ENCODE measurements at regions of chr3 and their contacts with region 1.

Region 1: GRCh38 chr3:115692887-115693524 is 69.7 kb downstream of the GAP43 start:
- DNase-seq: peak; percentile 86
- H3K4me3 Mint-ChIP-seq: no peak overlapping the region
- H3K27ac Mint-ChIP-seq: no peak overlapping the region
- H3K4me1 Mint-ChIP-seq: peaks cover 2% of the 10 kb centered on the region
- H3K27me3 Mint-ChIP-seq: no peaks in the 10 kb centered on the region

Region 2: DNA sequence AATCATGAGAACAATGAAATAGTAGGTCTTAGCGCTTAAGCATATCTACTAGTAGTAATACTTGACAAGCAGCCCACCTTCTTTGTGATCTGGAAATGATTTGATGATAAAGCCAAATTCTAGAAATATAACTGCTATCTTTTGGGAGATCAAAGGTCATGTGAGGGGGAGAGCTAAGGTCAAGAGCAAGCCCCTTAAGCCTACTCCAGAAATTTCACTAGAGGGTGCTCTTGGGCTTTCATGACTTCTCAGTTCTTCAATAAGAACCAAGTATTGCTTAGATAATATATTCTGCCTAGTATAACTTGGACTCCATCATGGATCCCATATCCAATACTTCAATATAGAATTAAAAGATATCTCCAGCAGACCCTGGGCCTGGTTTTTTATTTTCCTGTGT is 865.5 kb before region 1 on chr3:
- CTCF ChIA-PET with region 1: no interaction called
- intact Hi-C with region 1: loop called (anchors 1 kb)
- DNase-seq: peak; percentile 11
- H3K4me3 Mint-ChIP-seq: no peak overlapping the region
- H3K27ac Mint-ChIP-seq: no peak overlapping the region
- H3K4me1 Mint-ChIP-seq: peaks cover 4% of the 10 kb centered on the region
- H3K27me3 Mint-ChIP-seq: no peaks in the 10 kb centered on the region

Region 3: DNA sequence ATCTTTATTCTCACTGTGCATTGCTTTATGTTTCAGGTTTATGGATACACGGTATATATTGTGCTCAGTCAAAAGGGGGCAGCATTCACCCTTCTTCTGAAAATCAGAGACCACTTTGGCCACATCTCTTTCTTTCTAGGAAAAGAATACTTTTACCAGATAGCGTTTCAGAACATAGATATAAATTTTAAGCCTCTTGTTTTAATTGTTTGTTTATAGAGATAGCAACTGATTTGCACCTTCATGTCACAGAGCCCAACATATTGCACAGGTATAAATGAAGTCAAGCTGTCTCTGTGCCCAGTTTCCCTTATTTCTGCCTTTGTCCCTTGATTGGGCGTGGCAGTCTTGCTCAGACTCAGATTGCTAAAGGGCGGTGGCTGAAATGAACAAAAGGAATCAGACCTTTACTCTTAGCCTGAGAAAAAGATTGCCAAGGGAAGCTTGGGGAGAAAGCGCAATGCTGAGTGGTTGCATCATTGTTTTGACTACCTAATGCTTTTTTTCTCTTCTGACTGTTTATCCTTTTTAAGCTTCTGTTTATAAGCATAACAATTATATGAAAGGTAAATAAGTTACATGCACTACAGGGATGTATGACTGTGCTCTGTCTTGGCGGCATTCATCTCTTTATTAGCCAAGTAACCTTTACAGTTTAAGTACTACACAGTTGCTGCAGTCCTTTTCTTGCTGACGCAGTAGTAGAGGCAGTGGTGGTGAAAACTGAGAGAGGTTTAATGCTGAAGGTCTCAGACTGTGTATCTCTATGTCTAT is 475.1 kb before region 1 on chr3:
- CTCF ChIA-PET with region 1: interaction called, 21 read pairs
- intact Hi-C with region 1: loop called (anchors 1 kb)
- DNase-seq: peak; percentile 23
- H3K4me3 Mint-ChIP-seq: no peak overlapping the region
- H3K27ac Mint-ChIP-seq: no peak overlapping the region
- H3K4me1 Mint-ChIP-seq: no peaks in the 10 kb centered on the region
- H3K27me3 Mint-ChIP-seq: no peaks in the 10 kb centered on the region

Region 4: DNA sequence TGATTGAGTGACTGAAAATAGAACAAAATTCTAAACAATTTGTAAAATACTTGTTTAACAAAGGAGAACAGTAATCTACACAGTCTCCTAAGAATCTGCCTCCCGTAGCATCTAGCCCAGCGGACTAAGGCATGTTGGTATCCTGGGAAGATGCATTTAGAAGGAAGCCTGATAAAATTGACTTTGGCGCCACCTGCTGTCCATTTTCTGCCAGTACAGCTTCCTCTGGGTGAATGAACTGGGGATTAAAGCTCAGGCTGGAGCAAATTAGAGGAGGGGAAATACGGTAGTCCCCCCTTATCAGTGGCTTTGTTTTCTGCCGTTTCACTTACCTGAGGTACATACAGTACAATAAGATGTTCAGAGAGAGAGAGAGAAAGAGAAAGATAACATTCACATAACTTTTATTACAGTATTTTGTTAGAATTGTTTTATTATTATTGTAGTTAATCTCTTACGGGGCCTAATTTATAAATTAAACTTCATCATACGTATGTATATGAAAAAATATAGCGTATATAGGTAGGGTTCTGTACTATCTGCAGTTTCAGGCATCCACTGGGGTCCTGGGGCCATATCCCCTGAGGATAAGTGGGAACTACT is 121.9 kb after region 1 on chr3:
- CTCF ChIA-PET with region 1: interaction called, 8 read pairs
- intact Hi-C with region 1: loop called (anchors 1 kb)
- DNase-seq: peak; percentile 82
- H3K4me3 Mint-ChIP-seq: no peak overlapping the region
- H3K27ac Mint-ChIP-seq: no peak overlapping the region
- H3K4me1 Mint-ChIP-seq: no peaks in the 10 kb centered on the region
- H3K27me3 Mint-ChIP-seq: no peaks in the 10 kb centered on the region

Region 5: DNA sequence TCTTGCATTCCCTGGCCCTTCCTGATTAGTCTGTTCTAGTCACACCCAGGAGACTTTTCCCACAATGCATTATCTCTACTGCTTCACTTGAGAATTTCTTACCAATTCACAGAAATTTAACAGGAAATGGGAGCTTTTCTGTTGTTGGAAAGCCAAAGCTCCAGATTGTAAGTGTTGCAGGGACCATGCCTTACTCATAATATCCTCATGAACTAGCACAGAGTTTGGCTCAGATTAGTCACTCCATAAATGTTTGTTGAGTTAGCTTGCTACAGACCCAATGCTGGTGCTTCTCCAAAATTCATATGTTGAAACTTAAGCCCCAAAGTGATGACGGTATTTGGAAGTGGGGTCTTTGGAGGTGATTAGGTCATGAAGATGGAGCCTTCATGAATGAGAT is 162.9 kb after region 1 on chr3:
- CTCF ChIA-PET with region 1: no interaction called
- intact Hi-C with region 1: no loop called
- DNase-seq: no peak
- H3K4me3 Mint-ChIP-seq: no peak overlapping the region
- H3K27ac Mint-ChIP-seq: no peak overlapping the region
- H3K4me1 Mint-ChIP-seq: no peaks in the 10 kb centered on the region
- H3K27me3 Mint-ChIP-seq: peaks cover 27% of the 10 kb centered on the region